ENCODE measurements at regions of chr11 and their contacts with region 1.

Region 1: GRCh38 chr11:101860696-101861427 is 53.9 kb upstream of the CEP126 start:
- DNase-seq: peak in 3 of 6 donors; percentile 9 to 35 (median 20)
- ATAC-seq: peak; percentile 56 to 95 (median 92)
- H3K4me3 ChIP-seq: no peak overlapping the region
- H3K27ac ChIP-seq: no peak overlapping the region
- H3K4me1 ChIP-seq: no peaks in the 10 kb centered on the region
- H3K27me3 ChIP-seq: no peaks in the 10 kb centered on the region
- CTCF ChIP-seq: peak in 3 of 4 donors; percentile 57 to 72 (median 68)

Region 2: DNA sequence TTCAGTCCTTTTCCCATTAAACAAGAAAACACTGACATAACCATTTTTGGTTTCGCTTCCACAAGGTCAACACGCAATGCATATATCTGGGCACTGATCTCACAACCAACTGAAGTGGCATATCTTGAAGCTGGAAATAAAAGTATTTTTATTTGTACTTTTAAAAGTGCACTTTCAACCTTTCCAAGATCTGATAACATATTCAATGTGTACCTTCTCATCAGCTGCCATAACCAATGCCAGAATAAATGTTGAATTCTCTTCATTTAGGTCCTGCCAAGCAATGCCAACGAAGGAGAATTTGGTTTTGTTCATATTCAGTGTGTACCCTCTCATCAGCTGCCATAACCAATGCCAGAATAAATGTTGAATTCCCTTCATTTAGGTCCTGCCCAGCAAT is 94.9 kb before region 1 on chr11:
- intact Hi-C with region 1: no loop called
- DNase-seq: no peak
- ATAC-seq: peak in 1 of 4 donors; percentile 22
- H3K4me3 ChIP-seq: no peak overlapping the region
- H3K27ac ChIP-seq: no peak overlapping the region
- H3K4me1 ChIP-seq: no peaks in the 10 kb centered on the region
- H3K27me3 ChIP-seq: no peaks in the 10 kb centered on the region
- CTCF ChIP-seq: no peak

Region 3: DNA sequence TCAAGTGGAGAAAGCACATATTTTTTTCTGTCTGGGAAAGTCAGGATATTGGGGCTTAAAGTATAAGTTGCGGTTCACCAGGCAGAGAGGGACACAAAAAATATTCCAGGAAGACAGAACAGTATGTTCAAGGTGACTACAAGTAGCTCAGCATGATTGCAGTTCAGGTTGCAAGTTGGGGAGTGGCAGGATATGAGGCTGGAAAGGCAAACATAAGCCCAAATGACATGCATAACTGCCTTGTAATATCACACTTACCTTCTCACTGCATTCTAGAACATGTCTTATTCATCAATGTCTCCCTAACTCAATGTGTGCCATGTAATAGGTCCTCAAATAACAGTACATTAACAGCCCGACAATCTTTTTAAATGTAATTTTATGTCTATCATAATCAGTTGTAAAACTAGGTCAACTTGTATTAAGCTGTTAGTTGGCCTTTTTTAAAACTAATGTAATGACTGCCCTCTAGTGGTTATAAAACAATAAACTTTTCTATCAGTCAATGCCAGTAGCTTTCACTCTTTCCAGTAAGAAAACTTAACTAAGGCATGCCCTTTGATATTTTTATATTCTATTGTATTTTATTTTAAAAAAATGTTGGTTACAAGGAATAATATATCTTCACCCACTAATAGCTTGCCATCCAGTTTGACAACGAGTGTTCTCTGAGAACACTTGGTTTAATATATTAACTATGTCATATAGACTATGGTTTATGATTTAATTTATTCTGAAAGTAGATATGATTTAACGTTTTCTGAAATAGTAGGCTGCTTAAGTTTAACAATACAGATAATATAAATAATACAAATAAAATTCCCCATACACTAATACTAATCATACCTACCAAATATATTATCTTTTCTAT is 146.9 kb after region 1 on chr11:
- intact Hi-C with region 1: loop called in 1 of 3 experiments (anchors 5 kb)
- DNase-seq: no peak
- ATAC-seq: peak; percentile 77 to 90 (median 88)
- H3K4me3 ChIP-seq: no peak overlapping the region
- H3K27ac ChIP-seq: no peak overlapping the region
- H3K4me1 ChIP-seq: peaks cover 0 to 3% (median 0%) of the 10 kb centered on the region in 3 donors
- H3K27me3 ChIP-seq: no peaks in the 10 kb centered on the region
- CTCF ChIP-seq: peak; percentile 28 to 58 (median 47)

Region 4: DNA sequence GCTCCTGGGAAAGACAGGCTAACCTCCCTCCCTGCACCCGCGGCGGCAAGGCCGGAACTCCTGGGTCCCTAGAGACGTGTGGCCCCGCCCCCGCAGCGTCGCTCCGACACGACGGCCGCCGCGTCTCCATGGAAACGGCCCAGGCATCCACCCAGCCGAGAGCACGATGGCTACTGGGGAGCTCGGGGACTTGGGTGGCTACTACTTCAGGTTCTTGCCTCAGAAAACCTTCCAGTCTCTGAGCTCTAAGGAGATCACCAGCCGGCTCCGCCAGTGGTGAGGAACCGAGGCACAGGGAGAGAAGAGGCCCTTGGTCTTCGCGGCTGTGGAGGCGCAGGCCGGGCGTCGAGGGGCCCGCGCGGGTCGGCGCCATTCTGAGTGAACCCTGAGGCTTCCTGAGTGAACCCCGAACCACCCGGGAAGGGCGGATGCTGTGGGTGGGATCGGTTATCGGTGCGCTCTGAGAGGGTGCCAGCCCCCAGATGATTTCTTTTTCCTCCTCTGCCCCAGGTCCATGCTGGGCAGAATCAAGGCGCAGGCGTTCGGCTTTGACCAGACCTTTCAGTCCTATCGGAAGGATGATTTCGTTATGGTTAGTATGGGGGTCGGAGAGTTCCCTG is 186.6 kb after region 1 on chr11 and contains the start of gene CFAP300:
- intact Hi-C with region 1: no loop called
- DNase-seq: peak; percentile 62 to 87 (median 70)
- ATAC-seq: peak; percentile 85 to 95 (median 93)
- H3K4me3 ChIP-seq: peak within 1 kb of the TSS; percentile 20 to 41 (median 34)
- H3K27ac ChIP-seq: no peak within 1 kb of the TSS
- H3K4me1 ChIP-seq: no peaks in the 10 kb centered on the region
- H3K27me3 ChIP-seq: no peaks in the 10 kb centered on the region
- CTCF ChIP-seq: no peak
- total RNA-seq, gene CFAP300: 0.32 to 0.90 (median 0.68) TPM

Measured in pancreas (tissue), 10 donors.